Left lung (tissue), 14 donors: ENCODE measurements at regions of chr16 and their contacts with region 1.

Region 1: DNA sequence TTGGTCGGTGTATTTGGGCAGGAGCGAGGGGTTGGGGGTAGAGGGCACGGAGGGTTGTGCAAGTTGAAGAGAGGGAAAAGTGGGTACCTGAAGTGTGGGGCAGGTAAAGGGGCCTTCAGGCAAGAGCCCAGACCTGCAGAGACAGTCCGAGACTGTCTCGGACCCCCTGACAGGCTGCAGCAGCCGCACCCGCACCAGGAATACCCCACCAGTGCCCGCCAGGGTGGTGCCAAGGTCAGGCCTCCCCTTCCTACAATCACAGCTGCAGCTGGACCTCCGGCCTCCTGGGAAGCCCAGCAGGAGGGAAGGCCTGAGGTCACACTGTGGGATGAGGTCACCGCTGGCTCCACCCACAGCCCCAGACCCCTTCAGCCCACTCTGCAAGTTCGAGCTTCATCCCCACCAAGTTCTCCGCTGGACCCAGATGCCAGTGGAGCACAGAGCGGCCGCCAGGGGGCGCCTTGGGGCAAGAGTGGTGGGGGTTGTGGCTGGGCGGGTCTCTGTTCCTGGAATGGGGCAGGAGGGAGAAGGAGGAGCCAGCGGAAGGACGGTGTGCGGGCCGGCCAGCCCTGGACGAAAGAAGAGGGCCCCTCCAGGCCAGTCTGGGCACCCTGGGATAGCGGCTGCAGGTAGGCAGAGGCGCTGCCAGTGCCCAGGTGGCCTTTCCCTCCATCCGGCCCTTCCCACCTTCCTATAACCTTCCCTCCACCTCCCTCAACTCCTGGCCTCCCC is at the start of gene HSD3B7:
- DNase-seq: peak; percentile 66 to 99 (median 86)
- ATAC-seq: peak; percentile 98
- H3K4me3 ChIP-seq: peak within 1 kb of the TSS; percentile 35 to 46
- H3K27ac ChIP-seq: no peak within 1 kb of the TSS
- H3K4me1 ChIP-seq: peaks cover 5 to 16% of the 10 kb centered on the region in 2 donors
- H3K27me3 ChIP-seq: no peaks in the 10 kb centered on the region
- CTCF ChIP-seq: peak; percentile 91 to 97
- polyA plus RNA-seq, gene HSD3B7: 3.9 to 5.1 (median 4.5) TPM

Region 2: GRCh38 chr16:31064882-31065461 is 80.1 kb after region 1 on chr16:
- intact Hi-C with region 1: no loop called
- DNase-seq: no peak
- ATAC-seq: peak; percentile 82
- H3K4me3 ChIP-seq: no peak overlapping the region
- H3K27ac ChIP-seq: peak overlapping the region; percentile 46 to 65
- H3K4me1 ChIP-seq: peaks cover 4 to 19% of the 10 kb centered on the region in 2 donors
- H3K27me3 ChIP-seq: no peaks in the 10 kb centered on the region
- CTCF ChIP-seq: no peak

Region 3: GRCh38 chr16:31430380-31431052 is 445.7 kb after region 1 on chr16:
- intact Hi-C with region 1: loop called in 1 of 2 experiments (anchors 10 kb)
- DNase-seq: no peak
- ATAC-seq: no peak
- H3K4me3 ChIP-seq: no peak overlapping the region
- H3K27ac ChIP-seq: no peak overlapping the region
- H3K4me1 ChIP-seq: peaks cover 4% of the 10 kb centered on the region in 2 donors
- H3K27me3 ChIP-seq: peaks cover 0 to 12% of the 10 kb centered on the region in 2 donors
- CTCF ChIP-seq: no peak

Region 4: GRCh38 chr16:31868691-31869167 is 883.9 kb after region 1 on chr16:
- intact Hi-C with region 1: loop called in 1 of 2 experiments (anchors 10 kb)
- DNase-seq: peak in 3 of 4 donors; percentile 73 to 83 (median 74)
- ATAC-seq: peak; percentile 77
- H3K4me3 ChIP-seq: peak overlapping the region in 1 of 2 donors; percentile 16
- H3K27ac ChIP-seq: peak overlapping the region; percentile 59 to 96
- H3K4me1 ChIP-seq: peaks cover 10 to 52% of the 10 kb centered on the region in 2 donors
- H3K27me3 ChIP-seq: no peaks in the 10 kb centered on the region
- CTCF ChIP-seq: peak; percentile 80 to 94